Activated naive CD4-positive, alpha-beta T cell treated with anti-CD3 and anti-CD28 coated beads for 36 hours (primary cell): ENCODE measurements at regions of chr20 and their contacts with region 1.

Region 1: DNA sequence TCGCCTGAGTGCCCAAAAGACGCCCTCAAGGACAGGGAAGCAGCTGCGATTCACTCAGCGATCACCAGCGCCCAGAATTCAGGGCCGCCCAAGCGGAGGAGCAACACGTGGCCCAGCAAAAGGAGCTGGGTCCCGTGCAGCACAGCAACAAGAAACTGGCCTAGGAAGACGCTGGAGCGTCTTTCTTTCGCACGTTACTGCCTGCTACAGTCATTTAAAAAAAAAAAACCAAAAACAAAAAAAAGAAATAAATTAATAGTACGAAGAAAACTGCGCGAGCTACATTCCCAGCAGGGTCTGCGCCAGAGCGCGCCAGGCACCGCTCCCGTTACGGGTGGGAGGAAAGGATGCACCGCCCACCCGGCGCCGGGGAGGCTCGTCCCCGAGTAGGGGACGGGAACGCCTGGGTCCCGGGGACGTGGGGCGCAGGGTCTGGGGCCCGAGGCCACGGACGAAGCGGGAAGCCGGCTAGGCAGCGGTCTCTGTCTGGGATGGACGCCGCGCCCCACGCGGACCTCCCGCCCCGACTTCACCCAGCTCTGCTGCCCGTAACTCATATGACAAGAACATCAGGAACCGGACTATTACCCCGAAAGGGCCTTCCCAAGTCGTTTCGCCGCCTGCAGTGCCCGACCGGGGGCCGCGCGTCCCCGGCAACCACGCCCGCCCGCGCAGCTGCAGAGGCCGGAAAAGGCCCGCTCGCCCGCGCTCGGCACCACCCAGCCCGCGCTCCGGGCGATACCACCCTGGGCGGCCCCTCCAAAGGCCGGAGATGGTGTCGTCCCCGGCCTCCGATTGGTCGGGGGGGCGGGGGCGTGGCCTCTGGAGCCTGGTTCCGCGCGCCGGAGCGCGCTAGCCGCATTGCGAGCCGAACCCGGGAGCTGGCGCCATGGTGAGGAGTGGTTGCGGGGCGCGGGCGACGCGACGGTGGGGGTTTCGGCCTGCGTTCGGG is at the start of gene NOP56:
- DNase-seq: peak; percentile 92
- H3K4me3 Mint-ChIP-seq: peak within 1 kb of the TSS; percentile 90
- H3K27ac Mint-ChIP-seq: peak within 1 kb of the TSS; percentile 90
- H3K4me1 Mint-ChIP-seq: peaks cover 48% of the 10 kb centered on the region
- H3K27me3 Mint-ChIP-seq: no peaks in the 10 kb centered on the region
- total RNA-seq, gene NOP56: 385 to 405 TPM

Region 2: DNA sequence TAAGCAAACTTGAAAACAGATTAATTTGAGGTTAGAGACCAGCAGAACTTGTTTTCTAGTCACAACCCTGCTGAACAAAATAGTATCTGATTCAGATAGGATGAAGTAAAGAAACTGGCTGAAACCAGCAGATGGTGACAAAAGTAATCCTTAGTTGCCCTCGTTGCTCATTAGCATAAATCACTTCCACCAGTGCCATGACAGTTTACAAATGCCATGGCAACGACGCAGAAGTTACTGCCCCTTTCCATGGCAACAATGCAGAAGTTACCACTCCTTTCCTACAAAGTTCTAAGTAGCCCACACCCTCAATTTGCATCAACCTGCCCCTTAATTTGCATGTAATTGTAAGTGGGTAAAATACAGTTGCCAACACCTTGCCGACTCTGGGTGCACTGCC is 205.2 kb before region 1 on chr20:
- CTCF ChIA-PET with region 1: no interaction called
- intact Hi-C with region 1: no loop called
- DNase-seq: no peak
- H3K4me3 Mint-ChIP-seq: no peak overlapping the region
- H3K27ac Mint-ChIP-seq: no peak overlapping the region
- H3K4me1 Mint-ChIP-seq: peaks cover 15% of the 10 kb centered on the region
- H3K27me3 Mint-ChIP-seq: no peaks in the 10 kb centered on the region

Region 3: DNA sequence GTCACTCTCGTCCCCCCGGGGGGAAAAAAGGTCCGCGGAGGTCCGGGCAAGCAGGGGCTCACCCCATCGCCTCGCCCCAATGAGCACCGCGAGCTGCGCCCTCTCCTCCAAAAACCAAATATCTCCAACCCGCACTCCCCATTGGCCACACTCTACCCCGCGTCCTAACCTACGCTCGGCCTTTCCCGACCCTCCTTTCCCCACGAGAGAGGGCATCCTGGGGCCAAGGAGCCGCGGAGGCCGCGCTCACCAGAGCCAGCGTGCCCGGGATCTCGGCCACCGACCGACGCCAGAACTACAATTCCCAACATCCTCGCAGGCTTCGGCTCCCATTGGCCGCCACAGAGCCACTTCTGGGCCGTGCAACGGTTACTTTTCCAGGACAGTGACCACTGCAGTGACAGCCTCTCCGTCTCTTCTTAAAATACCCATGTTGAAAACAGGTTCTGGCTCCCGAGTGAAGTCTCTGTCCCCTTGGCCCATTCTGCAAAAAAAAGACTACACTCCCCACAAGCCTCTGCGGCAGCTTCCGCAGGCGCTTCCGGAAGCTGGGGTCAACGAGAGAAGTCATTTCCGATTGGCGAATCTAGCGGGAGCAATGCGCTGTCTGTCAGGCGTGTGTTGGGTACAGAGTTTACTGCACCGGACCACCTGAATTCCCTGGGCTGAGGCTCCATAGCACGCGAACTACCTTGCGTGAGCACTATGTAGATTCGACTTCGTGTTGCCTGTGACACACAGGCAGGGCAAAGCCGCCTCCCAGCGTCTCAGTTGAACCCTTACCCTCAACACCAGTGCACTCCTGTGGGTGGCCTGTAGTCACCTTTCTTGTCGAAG is 143.2 kb before region 1 on chr20 and contains the start of gene ZNF343:
- CTCF ChIA-PET with region 1: no interaction called
- intact Hi-C with region 1: loop called (anchors 5 kb)
- DNase-seq: peak; percentile 85
- H3K4me3 Mint-ChIP-seq: peak within 1 kb of the TSS; percentile 99
- H3K27ac Mint-ChIP-seq: peak within 1 kb of the TSS; percentile 90
- H3K4me1 Mint-ChIP-seq: peaks cover 21% of the 10 kb centered on the region
- H3K27me3 Mint-ChIP-seq: peaks cover 3% of the 10 kb centered on the region
- total RNA-seq, gene ZNF343: 5.3 to 5.7 TPM

Region 4: DNA sequence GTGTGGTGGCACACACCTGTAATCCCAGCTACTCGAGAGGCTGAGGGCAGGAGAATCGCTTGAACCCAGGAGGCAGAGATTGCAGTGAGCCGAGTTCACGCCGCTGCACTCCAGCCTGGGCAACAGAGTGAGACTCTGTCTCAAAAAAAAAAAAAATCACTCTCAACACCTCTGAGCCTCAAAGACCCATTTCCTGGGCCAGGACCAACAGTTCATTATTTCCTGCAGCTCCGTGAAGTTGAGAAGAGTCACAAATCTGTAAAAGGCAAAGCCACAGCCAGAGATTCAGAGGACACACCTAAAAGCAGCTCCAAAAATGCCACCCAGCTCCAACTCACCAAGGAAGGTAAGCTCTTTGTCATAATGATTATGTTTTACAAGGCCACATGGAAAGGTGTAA is 14.8 kb before region 1 on chr20:
- CTCF ChIA-PET with region 1: interaction called, 10 read pairs
- intact Hi-C with region 1: no loop called
- DNase-seq: no peak
- H3K4me3 Mint-ChIP-seq: no peak overlapping the region
- H3K27ac Mint-ChIP-seq: no peak overlapping the region
- H3K4me1 Mint-ChIP-seq: peaks cover 3% of the 10 kb centered on the region
- H3K27me3 Mint-ChIP-seq: no peaks in the 10 kb centered on the region

Region 5: GRCh38 chr20:2663887-2664719 is 12.1 kb after region 1 on chr20 and contains the start of gene IDH3B:
- CTCF ChIA-PET with region 1: interaction called, 3 read pairs
- intact Hi-C with region 1: loop called (anchors 1 kb)
- DNase-seq: peak; percentile 96
- H3K4me3 Mint-ChIP-seq: peak within 1 kb of the TSS; percentile 95
- H3K27ac Mint-ChIP-seq: peak within 1 kb of the TSS; percentile 97
- H3K4me1 Mint-ChIP-seq: peaks cover 21% of the 10 kb centered on the region
- H3K27me3 Mint-ChIP-seq: no peaks in the 10 kb centered on the region
- total RNA-seq, gene IDH3B: 123 to 125 TPM